ENCODE measurements at regions of chr11 and their contacts with region 1.

Region 1: DNA sequence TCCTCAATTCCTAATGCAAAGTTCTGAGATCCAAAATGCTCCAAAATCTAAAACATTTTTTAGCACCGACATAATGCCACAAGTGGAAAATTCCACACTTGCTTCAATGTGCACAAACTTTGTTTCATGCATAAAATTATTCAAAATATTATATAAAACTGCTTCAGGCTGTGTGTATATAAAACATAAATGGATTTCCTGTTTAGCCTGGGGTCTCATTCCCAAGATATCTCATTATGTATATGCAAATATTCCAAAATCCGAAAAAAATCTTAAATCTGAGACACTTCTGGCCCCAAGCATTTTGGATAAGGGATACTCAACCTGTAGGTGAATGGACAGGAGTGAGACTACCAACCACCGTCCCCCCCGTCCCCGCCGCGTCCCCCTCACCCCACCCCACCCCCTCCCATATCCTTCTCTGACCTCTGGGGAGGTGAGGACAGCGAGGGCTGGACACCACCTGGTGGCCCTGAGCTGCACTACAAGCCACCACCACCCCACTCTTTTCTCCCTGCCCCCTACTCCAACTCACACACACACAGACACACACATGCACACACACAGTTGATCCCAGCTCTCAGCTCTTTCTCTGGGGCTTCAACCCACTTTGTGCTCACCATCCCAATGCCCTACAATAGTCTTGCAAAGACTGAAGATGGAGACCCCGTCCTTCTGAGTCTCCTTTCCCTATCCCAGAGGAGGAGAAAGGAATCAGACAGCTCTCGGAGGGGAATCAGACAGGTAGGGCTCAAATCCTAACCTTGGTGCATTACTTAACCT is 101.0 kb downstream of the PDE2A start:
- DNase-seq: peak; percentile 45 to 46
- H3K4me3 ChIP-seq: no peak overlapping the region
- H3K27ac ChIP-seq: no peak overlapping the region
- H3K4me1 ChIP-seq: no peaks in the 10 kb centered on the region
- H3K27me3 ChIP-seq: no peaks in the 10 kb centered on the region
- CTCF ChIP-seq: peak; percentile 53 to 78 (median 65)
- POLR2A ChIP-seq: no peak

Region 2: GRCh38 chr11:72373163-72373562 is 200.1 kb before region 1 on chr11:
- intact Hi-C with region 1: no loop called
- DNase-seq: peak; percentile 53 to 62
- H3K4me3 ChIP-seq: no peak overlapping the region
- H3K27ac ChIP-seq: peak overlapping the region; percentile 18 to 70 (median 63)
- H3K4me1 ChIP-seq: peaks cover 18% of the 10 kb centered on the region in 2 donors
- H3K27me3 ChIP-seq: no peaks in the 10 kb centered on the region
- CTCF ChIP-seq: no peak
- POLR2A ChIP-seq: no peak

Region 3: GRCh38 chr11:72483412-72484186 is 89.7 kb before region 1 on chr11:
- intact Hi-C with region 1: loop called (anchors 5 kb)
- DNase-seq: peak in 1 of 2 donors; percentile 8
- H3K4me3 ChIP-seq: no peak overlapping the region
- H3K27ac ChIP-seq: peak overlapping the region in 2 of 3 donors; percentile 8 to 36
- H3K4me1 ChIP-seq: peaks cover 0 to 17% of the 10 kb centered on the region in 2 donors
- H3K27me3 ChIP-seq: no peaks in the 10 kb centered on the region
- CTCF ChIP-seq: no peak
- POLR2A ChIP-seq: no peak